AG04450 (cell line): ENCODE measurements at regions of chr3 and their contacts with region 1.

Region 1: DNA sequence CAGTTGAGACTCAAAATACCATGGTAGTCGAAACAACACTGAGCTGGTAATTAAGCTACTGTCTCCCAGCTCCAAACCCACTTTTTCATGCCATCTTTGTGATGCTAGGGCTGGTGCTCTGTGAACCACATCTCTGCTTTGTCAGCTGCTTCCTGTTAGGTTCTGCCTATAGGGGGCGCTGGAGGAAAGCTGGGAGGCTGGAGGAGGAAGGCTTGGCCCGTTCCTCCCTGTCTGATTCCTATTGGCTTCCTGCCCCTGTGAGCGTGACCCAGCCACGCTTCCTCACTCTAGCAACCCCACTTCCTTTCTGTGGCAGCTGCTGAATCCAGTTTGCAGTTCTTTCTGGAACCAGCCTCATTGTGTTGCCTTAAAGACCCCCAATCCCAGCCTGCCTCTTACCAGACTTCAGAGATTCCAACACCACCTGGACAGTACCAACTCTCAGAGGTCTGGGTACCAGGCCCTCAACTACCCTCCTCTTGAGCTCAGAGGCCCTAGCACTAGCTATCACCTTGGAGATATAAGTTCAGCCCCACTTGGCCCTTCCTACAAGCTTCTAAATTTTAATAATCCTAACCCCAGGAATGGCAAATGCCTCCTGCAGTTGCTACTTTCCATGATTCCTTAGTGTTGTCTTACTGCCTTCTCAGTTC is 120.9 kb downstream of the ERC2 start:
- DNase-seq: no peak
- H3K4me3 ChIP-seq: no peak overlapping the region
- H3K27ac ChIP-seq: no peak overlapping the region
- H3K27me3 ChIP-seq: no peaks in the 10 kb centered on the region
- CTCF ChIP-seq: no peak

Region 2: DNA sequence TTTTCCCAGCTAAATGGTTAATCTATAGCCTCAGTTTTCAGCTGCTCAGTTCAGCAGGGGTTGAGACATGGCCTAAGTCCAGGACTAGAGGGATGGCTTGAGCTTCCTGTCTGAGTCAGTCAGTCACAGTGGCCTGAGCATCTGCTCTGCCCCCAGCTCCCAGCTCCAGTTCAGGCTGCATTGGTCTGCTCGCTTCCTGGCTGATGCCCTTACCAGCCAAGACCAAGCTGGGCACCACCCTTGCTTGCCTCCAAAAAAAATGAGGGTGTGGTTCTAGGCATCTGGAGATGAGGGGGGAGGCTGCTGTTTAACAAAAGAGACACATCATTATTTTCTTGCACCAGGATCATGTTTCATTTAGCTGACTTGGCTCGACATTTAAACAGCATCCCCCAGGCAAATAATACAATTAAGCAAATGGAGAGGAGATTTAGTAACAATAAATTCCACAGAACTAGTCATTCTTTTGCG is 931.0 kb before region 1 on chr3:
- CTCF ChIA-PET with region 1: interaction called, 15 read pairs
- POLR2A ChIA-PET with region 1: no interaction called
- DNase-seq: peak; percentile 74
- H3K4me3 ChIP-seq: no peak overlapping the region
- H3K27ac ChIP-seq: peak overlapping the region; percentile 65
- H3K27me3 ChIP-seq: no peaks in the 10 kb centered on the region
- CTCF ChIP-seq: no peak

Region 3: DNA sequence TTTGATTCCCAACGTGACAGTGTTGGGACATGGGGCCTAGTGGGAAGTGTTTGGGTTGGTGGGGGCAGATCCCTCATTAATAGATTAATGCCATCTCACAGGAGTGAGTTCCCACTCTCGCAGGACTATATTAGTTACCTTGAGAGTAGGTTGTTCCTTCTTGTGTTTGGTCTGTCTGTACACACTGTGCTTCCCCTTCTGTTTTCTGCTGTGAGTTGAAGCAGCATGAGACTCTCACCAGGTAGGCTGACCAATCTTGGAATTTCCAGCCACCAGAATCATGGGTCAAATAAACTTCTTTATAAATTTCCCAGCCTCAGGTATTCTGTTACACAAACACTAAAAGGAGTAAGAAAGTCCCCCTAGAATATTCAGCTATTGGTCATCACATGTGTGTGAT is 24.5 kb before region 1 on chr3:
- CTCF ChIA-PET with region 1: no interaction called
- POLR2A ChIA-PET with region 1: no interaction called
- DNase-seq: no peak
- H3K4me3 ChIP-seq: no peak overlapping the region
- H3K27ac ChIP-seq: no peak overlapping the region
- H3K27me3 ChIP-seq: no peaks in the 10 kb centered on the region
- CTCF ChIP-seq: no peak